Activated CD4-positive, alpha-beta memory T cell treated with anti-CD3 and anti-CD28 coated beads for 36 hours (primary cell): ENCODE measurements at regions of chr2 and their contacts with region 1.

Region 1: GRCh38 chr2:19868705-19869580 is 32.8 kb downstream of the TTC32 start:
- DNase-seq: peak; percentile 70
- H3K4me3 Mint-ChIP-seq: peak overlapping the region; percentile 84
- H3K27ac Mint-ChIP-seq: peak overlapping the region; percentile 75
- H3K4me1 Mint-ChIP-seq: peaks cover 21% of the 10 kb centered on the region
- H3K27me3 Mint-ChIP-seq: no peaks in the 10 kb centered on the region

Region 2: DNA sequence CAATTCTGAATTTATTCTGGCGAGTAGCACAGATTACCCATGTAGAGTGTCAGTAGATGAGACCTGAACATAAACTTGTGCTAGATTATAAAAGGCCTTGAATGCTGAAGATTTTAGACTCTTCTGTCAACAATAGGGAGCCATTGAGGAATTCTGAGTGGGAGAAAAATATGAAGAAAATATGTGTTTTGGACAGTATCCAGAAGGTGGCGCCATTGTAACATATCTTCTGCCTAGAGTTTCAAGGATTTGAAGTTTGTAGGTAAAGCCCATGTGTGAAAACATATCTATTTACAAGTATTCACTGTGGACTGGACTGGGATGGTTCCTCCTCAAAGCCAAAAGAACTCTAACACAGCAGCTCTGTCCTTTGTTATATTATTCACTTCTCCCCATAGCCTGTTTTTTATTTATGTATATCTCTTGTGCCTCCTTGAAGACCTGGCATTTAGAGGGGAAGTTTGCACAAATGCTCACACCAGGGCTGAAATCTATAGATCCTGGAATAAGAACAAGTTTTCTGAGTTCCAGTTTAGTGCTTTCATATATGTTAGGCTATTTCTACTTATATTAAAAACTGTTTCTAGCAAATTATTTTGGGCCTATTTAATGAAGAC is 1433.4 kb before region 1 on chr2:
- CTCF ChIA-PET with region 1: no interaction called
- POLR2A ChIA-PET with region 1: no interaction called
- intact Hi-C with region 1: loop called (anchors 5 kb)
- DNase-seq: no peak
- H3K4me3 Mint-ChIP-seq: no peak overlapping the region
- H3K27ac Mint-ChIP-seq: no peak overlapping the region
- H3K4me1 Mint-ChIP-seq: no peaks in the 10 kb centered on the region
- H3K27me3 Mint-ChIP-seq: no peaks in the 10 kb centered on the region

Region 3: GRCh38 chr2:18536100-18536499 is 1332.8 kb before region 1 on chr2:
- CTCF ChIA-PET with region 1: no interaction called
- POLR2A ChIA-PET with region 1: no interaction called
- intact Hi-C with region 1: loop called (anchors 5 kb)
- DNase-seq: no peak
- H3K4me3 Mint-ChIP-seq: no peak overlapping the region
- H3K27ac Mint-ChIP-seq: no peak overlapping the region
- H3K4me1 Mint-ChIP-seq: peaks cover 4% of the 10 kb centered on the region
- H3K27me3 Mint-ChIP-seq: peaks cover 6% of the 10 kb centered on the region

Region 4: DNA sequence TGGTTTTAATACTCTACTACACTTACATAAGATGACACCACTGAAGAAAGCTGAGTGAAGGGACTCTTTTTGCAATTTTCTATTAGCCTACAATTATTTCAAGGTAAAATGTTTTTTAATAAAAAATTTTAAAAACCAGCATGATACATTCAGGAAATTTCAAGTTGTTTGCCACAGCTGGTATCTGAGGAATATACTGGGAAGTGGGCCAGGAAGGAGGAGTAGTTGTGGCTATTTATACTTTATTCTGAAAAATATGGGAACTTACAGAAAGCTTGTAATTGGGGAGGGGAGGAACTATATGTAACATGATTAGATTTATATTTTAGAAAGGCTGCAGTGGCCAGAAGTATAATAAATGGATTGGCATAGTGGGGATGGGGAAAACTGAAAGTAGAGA is 80.1 kb after region 1 on chr2:
- CTCF ChIA-PET with region 1: no interaction called
- POLR2A ChIA-PET with region 1: no interaction called
- intact Hi-C with region 1: no loop called
- DNase-seq: no peak
- H3K4me3 Mint-ChIP-seq: no peak overlapping the region
- H3K27ac Mint-ChIP-seq: no peak overlapping the region
- H3K4me1 Mint-ChIP-seq: no peaks in the 10 kb centered on the region
- H3K27me3 Mint-ChIP-seq: no peaks in the 10 kb centered on the region